ENCODE measurements at regions of chr17 and their contacts with region 1.

Region 1: GRCh38 chr17:42322382-42323267 is 34.3 kb downstream of the STAT5A start:
- DNase-seq: peak; percentile 97
- H3K4me3 ChIP-seq: no peak overlapping the region
- H3K27ac ChIP-seq: peak overlapping the region in 3 of 5 donors; percentile 23 to 49 (median 46)
- H3K4me1 ChIP-seq: peaks cover 4 to 56% (median 13%) of the 10 kb centered on the region in 4 donors
- H3K27me3 ChIP-seq: no peaks in the 10 kb centered on the region
- CTCF ChIP-seq: peak in 6 of 7 experiments; percentile 66 to 100 (median 98)
- EP300 ChIP-seq: no peak
- POLR2A ChIP-seq: no peak

Region 2: DNA sequence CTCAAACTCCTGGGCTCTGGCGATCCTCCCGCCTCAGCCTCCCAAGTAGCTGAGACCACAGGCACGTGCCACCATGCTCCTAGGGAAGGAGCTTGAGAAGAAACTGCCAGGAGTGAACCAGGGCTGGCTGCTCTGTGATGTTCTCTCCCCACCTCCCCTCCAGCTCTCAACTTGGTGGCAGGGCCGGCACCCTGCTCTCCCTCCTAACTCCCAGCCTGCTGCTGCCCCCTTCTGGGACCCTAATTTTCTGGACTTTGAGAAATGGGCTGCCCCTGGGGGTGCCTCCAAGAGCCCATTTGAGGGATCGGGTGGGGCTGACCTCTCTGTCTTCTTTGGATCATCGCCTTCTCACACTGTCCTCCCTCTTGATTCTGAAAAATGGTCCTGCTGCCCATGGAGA is 80.5 kb after region 1 on chr17:
- intact Hi-C with region 1: loop called (anchors 5 kb)
- DNase-seq: peak in 1 of 2 donors; percentile 28
- H3K4me3 ChIP-seq: no peak overlapping the region
- H3K27ac ChIP-seq: peak overlapping the region in 3 of 5 donors; percentile 30 to 84 (median 49)
- H3K4me1 ChIP-seq: peaks cover 33 to 96% (median 50%) of the 10 kb centered on the region in 4 donors
- H3K27me3 ChIP-seq: no peaks in the 10 kb centered on the region
- CTCF ChIP-seq: peak in 1 of 7 experiments; percentile 20
- EP300 ChIP-seq: no peak
- POLR2A ChIP-seq: no peak

Region 3: GRCh38 chr17:42517516-42517915 is 194.9 kb after region 1 on chr17:
- intact Hi-C with region 1: loop called (anchors 10 kb)
- DNase-seq: peak; percentile 87 to 90
- H3K4me3 ChIP-seq: no peak overlapping the region
- H3K27ac ChIP-seq: peak overlapping the region; percentile 42 to 93 (median 91)
- H3K4me1 ChIP-seq: peaks cover 72 to 87% (median 82%) of the 10 kb centered on the region in 4 donors
- H3K27me3 ChIP-seq: no peaks in the 10 kb centered on the region
- CTCF ChIP-seq: peak in 5 of 7 experiments; percentile 91 to 95 (median 93)
- EP300 ChIP-seq: no peak
- POLR2A ChIP-seq: no peak

Measured in stomach (tissue), 19 donors.